Calu3 (cell line): ENCODE measurements at regions of chr12 and their contacts with region 1.

Region 1: DNA sequence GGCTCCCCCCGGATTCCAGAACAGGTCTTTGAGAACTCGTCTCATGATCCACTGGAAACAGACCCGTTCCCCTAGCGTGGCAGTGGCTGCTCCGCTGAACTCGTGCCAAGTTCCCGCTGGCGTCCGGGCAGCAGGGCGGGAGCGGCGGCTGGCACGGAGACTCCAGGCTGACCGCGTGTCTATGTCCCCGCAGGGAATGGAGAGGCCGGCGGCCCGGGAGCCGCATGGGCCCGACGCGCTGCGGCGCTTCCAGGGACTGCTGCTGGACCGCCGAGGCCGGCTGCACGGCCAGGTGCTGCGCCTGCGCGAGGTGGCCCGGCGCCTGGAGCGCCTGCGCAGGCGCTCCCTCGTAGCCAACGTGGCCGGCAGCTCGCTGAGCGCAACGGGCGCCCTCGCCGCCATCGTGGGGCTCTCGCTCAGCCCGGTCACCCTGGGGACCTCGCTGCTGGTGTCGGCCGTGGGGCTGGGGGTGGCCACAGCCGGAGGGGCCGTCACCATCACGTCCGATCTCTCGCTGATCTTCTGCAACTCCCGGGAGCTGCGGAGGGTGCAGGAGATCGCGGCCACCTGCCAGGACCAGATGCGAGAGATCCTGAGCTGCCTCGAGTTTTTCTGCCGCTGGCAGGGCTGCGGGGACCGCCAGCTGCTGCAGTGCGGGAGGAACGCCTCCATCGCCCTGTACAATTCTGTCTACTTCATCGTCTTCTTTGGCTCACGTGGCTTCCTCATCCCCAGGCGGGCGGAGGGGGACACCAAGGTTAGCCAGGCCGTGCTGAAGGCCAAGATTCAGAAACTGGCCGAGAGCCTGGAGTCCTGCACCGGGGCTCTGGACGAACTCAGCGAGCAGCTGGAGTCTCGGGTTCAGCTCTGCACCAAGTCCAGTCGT is 1.5 kb downstream of the APOLD1 start:
- DNase-seq: peak; percentile 81
- H3K4me3 Mint-ChIP-seq: peak overlapping the region; percentile 66
- H3K27ac Mint-ChIP-seq: peak overlapping the region; percentile 78
- H3K4me1 Mint-ChIP-seq: peaks cover 44% of the 10 kb centered on the region
- H3K27me3 Mint-ChIP-seq: no peaks in the 10 kb centered on the region
- CTCF ChIP-seq: no peak

Region 2: GRCh38 chr12:12813120-12814101 is 26.5 kb after region 1 on chr12 and contains the start of gene DDX47:
- CTCF ChIA-PET with region 1: interaction called, 17 read pairs
- intact Hi-C with region 1: no loop called
- DNase-seq: peak; percentile 98
- H3K4me3 Mint-ChIP-seq: peak within 1 kb of the TSS; percentile 88
- H3K27ac Mint-ChIP-seq: peak within 1 kb of the TSS; percentile 95
- H3K4me1 Mint-ChIP-seq: peaks cover 56% of the 10 kb centered on the region
- H3K27me3 Mint-ChIP-seq: no peaks in the 10 kb centered on the region
- CTCF ChIP-seq: peak; percentile 92
- total RNA-seq, gene DDX47: 60.2 and 60.5 TPM in 2 replicates

Region 3: GRCh38 chr12:12819671-12820311 is 32.8 kb after region 1 on chr12:
- CTCF ChIA-PET with region 1: interaction called, 3 read pairs
- intact Hi-C with region 1: loop called (anchors 5 kb)
- DNase-seq: no peak
- H3K4me3 Mint-ChIP-seq: peak overlapping the region; percentile 45
- H3K27ac Mint-ChIP-seq: peak overlapping the region; percentile 7
- H3K4me1 Mint-ChIP-seq: peaks cover 75% of the 10 kb centered on the region
- H3K27me3 Mint-ChIP-seq: no peaks in the 10 kb centered on the region
- CTCF ChIP-seq: no peak

Region 4: GRCh38 chr12:12890815-12891645 is 104.1 kb after region 1 on chr12 and contains the start of gene GPRC5A:
- CTCF ChIA-PET with region 1: no interaction called
- intact Hi-C with region 1: loop called (anchors 5 kb)
- DNase-seq: peak; percentile 98
- H3K4me3 Mint-ChIP-seq: peak within 1 kb of the TSS; percentile 95
- H3K27ac Mint-ChIP-seq: peak within 1 kb of the TSS; percentile 76
- H3K4me1 Mint-ChIP-seq: peaks cover 46% of the 10 kb centered on the region
- H3K27me3 Mint-ChIP-seq: no peaks in the 10 kb centered on the region
- CTCF ChIP-seq: no peak
- total RNA-seq, gene GPRC5A: 742 and 748 TPM in 2 replicates

Region 5: GRCh38 chr12:12983420-12984035 is 196.6 kb after region 1 on chr12:
- CTCF ChIA-PET with region 1: no interaction called
- intact Hi-C with region 1: loop called (anchors 2 kb)
- DNase-seq: peak; percentile 32
- H3K4me3 Mint-ChIP-seq: no peak overlapping the region
- H3K27ac Mint-ChIP-seq: no peak overlapping the region
- H3K4me1 Mint-ChIP-seq: no peaks in the 10 kb centered on the region
- H3K27me3 Mint-ChIP-seq: no peaks in the 10 kb centered on the region
- CTCF ChIP-seq: peak; percentile 25